ENCODE measurements at regions of chr14 and their contacts with region 1.

Region 1: GRCh38 chr14:20454516-20455354 is at the starts of genes APEX1 and OSGEP:
- DNase-seq: peak; percentile 100
- H3K4me3 ChIP-seq: peak within 1 kb of the TSS; percentile 82 to 87 (median 84)
- H3K27ac ChIP-seq: peak within 1 kb of the TSS; percentile 88 to 97 (median 94)
- H3K4me1 ChIP-seq: peaks cover 32 to 54% (median 46%) of the 10 kb centered on the region in 4 donors
- H3K27me3 ChIP-seq: no peaks in the 10 kb centered on the region
- CTCF ChIP-seq: no peak
- EP300 ChIP-seq: peak; percentile 12
- POLR2A ChIP-seq: no peak
- total RNA-seq, gene APEX1: 101 to 105 (median 104) TPM
- total RNA-seq, gene OSGEP: 23.5 to 36.8 (median 24.8) TPM

Region 2: DNA sequence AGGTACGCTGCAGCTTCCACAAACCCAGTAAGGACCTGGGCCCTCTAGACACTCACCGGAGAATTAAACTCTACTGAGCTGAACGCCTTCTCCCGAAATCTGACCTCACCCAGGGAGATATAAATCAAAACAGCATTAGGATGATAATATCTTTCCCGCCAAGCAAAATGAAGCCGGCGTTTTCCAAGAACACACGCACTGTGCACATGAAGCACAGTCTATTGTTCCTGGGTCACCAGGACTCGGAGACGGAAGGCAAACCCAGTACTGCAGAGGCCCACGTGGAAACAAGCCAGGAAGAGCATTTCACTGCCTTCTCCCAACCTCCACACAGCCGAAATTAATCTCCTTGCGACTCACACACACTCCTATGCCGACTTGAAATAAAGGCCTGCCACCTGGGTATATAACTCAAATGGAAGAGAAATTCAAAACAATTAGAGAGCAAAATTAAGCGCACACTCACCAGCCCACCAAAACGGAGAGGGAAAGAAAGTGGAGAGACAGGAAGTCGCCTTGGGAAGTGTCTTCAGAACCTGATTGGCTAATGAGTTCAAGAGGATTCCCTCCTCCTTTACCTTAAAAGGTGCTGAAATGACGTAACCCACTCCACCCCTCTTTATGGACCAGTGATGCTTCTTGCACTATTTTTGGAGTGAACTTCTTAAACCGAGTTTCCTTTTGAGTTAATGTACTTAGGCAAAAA is 121.8 kb before region 1 on chr14 and contains the start of gene CCNB1IP1:
- intact Hi-C with region 1: no loop called
- DNase-seq: peak; percentile 92
- H3K4me3 ChIP-seq: peak within 1 kb of the TSS; percentile 61 to 68 (median 66)
- H3K27ac ChIP-seq: peak within 1 kb of the TSS; percentile 89 to 92 (median 90)
- H3K4me1 ChIP-seq: peaks cover 11 to 44% (median 41%) of the 10 kb centered on the region in 4 donors
- H3K27me3 ChIP-seq: no peaks in the 10 kb centered on the region
- CTCF ChIP-seq: no peak
- EP300 ChIP-seq: no peak
- POLR2A ChIP-seq: peak; percentile 11
- total RNA-seq, gene CCNB1IP1: 31.8 to 60.6 (median 42.0) TPM

Region 3: GRCh38 chr14:20343092-20343861 is 111.5 kb before region 1 on chr14 and contains the start of gene PARP2:
- intact Hi-C with region 1: loop called (anchors 5 kb)
- DNase-seq: peak; percentile 98
- H3K4me3 ChIP-seq: peak within 1 kb of the TSS; percentile 57 to 84 (median 66)
- H3K27ac ChIP-seq: peak within 1 kb of the TSS; percentile 87 to 95 (median 90)
- H3K4me1 ChIP-seq: peaks cover 9 to 15% (median 11%) of the 10 kb centered on the region in 4 donors
- H3K27me3 ChIP-seq: no peaks in the 10 kb centered on the region
- CTCF ChIP-seq: no peak
- EP300 ChIP-seq: no peak
- POLR2A ChIP-seq: peak; percentile 98
- total RNA-seq, gene PARP2: 5.8 to 17.4 (median 8.9) TPM

Region 4: DNA sequence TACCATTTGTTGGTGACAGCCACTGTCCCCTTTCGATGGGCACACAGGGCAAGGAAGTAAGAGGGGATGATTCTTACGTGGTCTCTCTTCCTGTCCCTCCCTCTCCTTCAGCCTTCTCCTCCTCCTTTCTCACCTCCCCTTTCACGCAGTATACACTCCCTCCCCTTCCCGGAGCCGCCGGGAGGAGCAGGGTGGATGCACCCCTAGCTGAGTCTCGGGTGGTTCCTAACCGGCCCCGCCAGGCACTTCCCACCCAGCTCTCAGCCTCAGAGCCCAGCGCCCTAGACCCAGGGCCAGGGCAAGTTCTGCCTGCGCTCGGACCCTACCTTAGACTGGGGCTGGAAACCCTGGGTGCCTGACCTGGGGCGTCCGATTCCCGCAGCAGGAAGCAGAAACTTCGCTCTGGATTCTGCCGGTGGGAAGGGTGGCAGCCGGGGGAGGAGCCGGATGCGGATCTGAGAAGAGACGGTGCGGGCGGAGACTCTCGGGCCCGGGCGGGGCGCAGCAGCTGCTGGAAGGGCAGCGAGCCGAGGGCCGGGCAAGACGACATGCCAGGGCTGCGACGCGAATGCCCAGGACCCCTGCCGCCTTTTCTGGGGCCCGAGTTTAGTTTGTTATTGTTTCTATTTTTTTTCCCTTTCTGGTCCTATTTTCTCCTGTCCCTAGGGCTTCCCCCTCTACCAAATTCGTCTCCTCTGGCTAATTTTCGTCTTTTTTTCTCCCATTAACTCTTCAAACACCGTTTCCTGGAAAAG is 41.5 kb before region 1 on chr14 and contains the start of gene TEP1:
- intact Hi-C with region 1: loop called (anchors 5 kb)
- DNase-seq: peak; percentile 96
- H3K4me3 ChIP-seq: peak within 1 kb of the TSS; percentile 68 to 93 (median 84)
- H3K27ac ChIP-seq: peak within 1 kb of the TSS; percentile 88 to 99 (median 98)
- H3K4me1 ChIP-seq: peaks cover 16 to 27% (median 26%) of the 10 kb centered on the region in 4 donors
- H3K27me3 ChIP-seq: no peaks in the 10 kb centered on the region
- CTCF ChIP-seq: no peak
- EP300 ChIP-seq: no peak
- POLR2A ChIP-seq: peak; percentile 67
- total RNA-seq, gene TEP1: 17.2 to 28.8 (median 22.9) TPM

Measured in esophagus muscularis mucosa (tissue), 4 donors.